SK-N-SH (cell line): ENCODE measurements at regions of chr16 and their contacts with region 1.

Region 1: DNA sequence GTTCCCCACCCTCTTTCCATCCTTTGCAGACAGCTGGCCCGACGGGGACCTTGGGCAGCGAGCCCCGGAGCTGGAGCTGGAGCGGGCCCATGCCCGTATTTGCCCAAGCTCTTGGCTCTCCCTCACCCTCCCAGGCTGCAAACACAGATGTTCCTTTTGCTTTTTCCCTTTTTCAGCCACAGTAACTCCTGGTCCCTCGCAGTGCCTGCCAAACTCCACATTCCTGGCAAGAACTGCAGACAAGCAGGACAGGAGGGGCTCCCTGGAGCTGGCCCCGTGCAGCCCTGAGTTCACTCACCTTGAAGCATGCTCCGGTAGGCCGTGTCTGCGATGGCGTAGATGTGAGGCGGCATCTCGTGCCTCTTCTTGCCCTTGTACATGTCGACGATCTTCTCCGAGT is 33.9 kb downstream of the MYH11 start:
- DNase-seq: no peak
- H3K4me3 ChIP-seq: no peak overlapping the region
- H3K27ac ChIP-seq: no peak overlapping the region
- H3K4me1 ChIP-seq: no peaks in the 10 kb centered on the region
- H3K27me3 ChIP-seq: no peaks in the 10 kb centered on the region; the same call in 1 of the 2 replicates
- CTCF ChIP-seq: no peak
- EP300 ChIP-seq: no peak
- RAD21 ChIP-seq: no peak

Region 2: GRCh38 chr16:15732416-15732815 is 90.5 kb before region 1 on chr16:
- CTCF ChIA-PET with region 1: no interaction called
- POLR2A ChIA-PET with region 1: no interaction called
- DNase-seq: no peak
- H3K4me3 ChIP-seq: no peak overlapping the region
- H3K27ac ChIP-seq: no peak overlapping the region
- H3K4me1 ChIP-seq: no peaks in the 10 kb centered on the region
- H3K27me3 ChIP-seq: no peaks in the 10 kb centered on the region
- CTCF ChIP-seq: no peak
- EP300 ChIP-seq: no peak
- RAD21 ChIP-seq: no peak

Region 3: DNA sequence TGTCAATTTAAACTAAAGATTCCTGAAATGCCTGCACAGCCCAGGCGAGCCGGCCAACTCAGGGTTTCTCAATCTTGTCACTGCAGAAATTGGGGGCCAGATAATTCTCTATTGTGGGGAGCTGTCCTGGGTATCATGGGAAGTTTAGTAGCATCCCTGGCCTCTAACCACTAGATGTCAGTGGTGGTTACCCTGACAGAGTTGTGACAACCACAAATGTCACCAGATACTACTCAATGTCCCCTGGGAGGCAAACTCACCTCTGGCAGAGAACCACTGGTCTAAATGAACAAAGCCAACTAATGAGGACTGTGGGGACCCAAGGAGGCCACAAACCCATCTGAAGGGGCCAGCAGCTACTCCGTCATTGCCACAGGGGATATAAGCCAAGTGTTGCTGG is 57.1 kb before region 1 on chr16:
- CTCF ChIA-PET with region 1: interaction called, 33 read pairs
- POLR2A ChIA-PET with region 1: no interaction called
- DNase-seq: peak; percentile 64
- H3K4me3 ChIP-seq: no peak overlapping the region; a peak in 1 of 4 replicates
- H3K27ac ChIP-seq: no peak overlapping the region
- H3K4me1 ChIP-seq: no peaks in the 10 kb centered on the region
- H3K27me3 ChIP-seq: peaks cover 4% of the 10 kb centered on the region; the same call in 1 of the 2 replicates
- CTCF ChIP-seq: peak; percentile 67
- EP300 ChIP-seq: no peak
- RAD21 ChIP-seq: peak; percentile 81

Region 4: DNA sequence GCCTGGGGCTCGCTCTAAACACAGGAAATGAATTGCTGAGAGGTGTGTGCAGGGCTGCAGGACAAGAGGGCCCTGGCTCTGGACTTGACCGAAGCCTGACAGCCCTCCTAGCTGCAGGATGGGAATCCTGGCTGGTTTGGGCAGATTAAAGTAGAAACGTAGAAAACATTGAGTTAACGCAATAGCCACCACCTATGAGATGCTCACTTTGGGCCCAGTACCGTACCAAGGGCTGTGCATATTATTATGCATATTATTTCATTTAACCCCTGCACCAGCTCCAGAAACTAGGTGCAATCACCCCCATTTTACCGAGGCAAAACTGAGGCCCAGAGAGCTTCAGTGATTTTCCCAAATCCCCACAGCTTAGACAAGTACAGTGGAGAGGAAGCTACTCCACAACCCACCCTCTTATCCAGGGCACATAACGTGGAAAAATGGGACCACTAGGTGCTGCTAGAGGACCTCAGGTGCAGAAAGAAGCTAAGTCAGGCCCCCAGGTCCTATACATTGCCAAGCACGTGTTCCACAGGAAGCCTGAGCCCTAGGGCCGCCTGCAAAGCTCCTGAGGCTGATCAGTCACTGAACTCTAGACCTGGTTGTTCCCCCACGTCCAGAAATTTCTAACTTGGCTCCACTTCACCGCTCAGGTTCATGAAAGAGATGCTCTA is 45.3 kb before region 1 on chr16:
- CTCF ChIA-PET with region 1: interaction called, 27 read pairs
- POLR2A ChIA-PET with region 1: no interaction called
- DNase-seq: peak; percentile 32
- H3K4me3 ChIP-seq: no peak overlapping the region
- H3K27ac ChIP-seq: no peak overlapping the region
- H3K4me1 ChIP-seq: no peaks in the 10 kb centered on the region
- H3K27me3 ChIP-seq: peaks cover 7% of the 10 kb centered on the region; the same call in 1 of the 2 replicates
- CTCF ChIP-seq: peak; percentile 40
- EP300 ChIP-seq: no peak
- RAD21 ChIP-seq: peak; percentile 62

Region 5: DNA sequence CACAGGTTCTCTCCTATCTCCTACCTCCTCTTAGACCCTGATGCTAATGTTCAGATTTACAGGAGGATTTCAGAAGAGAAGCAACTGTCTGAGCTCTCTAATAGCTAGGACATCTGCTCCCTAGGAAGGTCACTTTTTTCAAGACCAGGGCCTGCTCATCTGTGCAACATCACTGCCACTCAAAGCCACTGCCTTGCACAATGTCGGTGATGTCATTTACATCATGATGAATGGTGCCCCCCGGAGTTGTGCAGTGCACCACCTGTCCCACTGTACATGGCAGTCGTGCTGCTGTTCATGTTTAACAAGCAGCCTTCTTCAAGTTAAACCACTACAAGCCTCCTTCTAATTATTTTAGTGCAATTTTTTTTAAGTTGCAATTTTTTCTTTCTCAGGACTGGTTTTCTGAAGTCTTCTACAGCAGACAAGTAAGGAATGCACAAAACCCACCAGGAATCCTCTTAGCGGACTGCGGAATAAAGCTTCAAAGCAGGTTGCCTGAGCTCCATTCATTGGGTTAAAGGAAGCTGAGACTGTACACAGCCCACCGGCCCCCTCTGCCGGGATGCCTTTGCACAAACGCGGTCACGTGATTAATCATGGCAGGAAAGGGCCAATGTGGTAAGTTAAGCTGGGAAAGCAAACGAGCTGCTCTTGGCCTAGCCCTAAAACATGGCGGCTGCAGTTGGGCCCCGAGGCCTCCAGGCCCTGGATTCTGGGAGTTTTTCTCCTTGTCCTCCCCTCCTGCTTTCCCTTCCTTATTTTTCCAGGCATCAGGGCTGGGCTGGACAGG is 40.2 kb before region 1 on chr16:
- CTCF ChIA-PET with region 1: interaction called, 27 read pairs
- POLR2A ChIA-PET with region 1: no interaction called
- DNase-seq: peak; percentile 22
- H3K4me3 ChIP-seq: no peak overlapping the region
- H3K27ac ChIP-seq: no peak overlapping the region
- H3K4me1 ChIP-seq: no peaks in the 10 kb centered on the region
- H3K27me3 ChIP-seq: peaks cover 7% of the 10 kb centered on the region; the same call in 1 of the 2 replicates
- CTCF ChIP-seq: no peak
- EP300 ChIP-seq: no peak
- RAD21 ChIP-seq: no peak

Region 6: DNA sequence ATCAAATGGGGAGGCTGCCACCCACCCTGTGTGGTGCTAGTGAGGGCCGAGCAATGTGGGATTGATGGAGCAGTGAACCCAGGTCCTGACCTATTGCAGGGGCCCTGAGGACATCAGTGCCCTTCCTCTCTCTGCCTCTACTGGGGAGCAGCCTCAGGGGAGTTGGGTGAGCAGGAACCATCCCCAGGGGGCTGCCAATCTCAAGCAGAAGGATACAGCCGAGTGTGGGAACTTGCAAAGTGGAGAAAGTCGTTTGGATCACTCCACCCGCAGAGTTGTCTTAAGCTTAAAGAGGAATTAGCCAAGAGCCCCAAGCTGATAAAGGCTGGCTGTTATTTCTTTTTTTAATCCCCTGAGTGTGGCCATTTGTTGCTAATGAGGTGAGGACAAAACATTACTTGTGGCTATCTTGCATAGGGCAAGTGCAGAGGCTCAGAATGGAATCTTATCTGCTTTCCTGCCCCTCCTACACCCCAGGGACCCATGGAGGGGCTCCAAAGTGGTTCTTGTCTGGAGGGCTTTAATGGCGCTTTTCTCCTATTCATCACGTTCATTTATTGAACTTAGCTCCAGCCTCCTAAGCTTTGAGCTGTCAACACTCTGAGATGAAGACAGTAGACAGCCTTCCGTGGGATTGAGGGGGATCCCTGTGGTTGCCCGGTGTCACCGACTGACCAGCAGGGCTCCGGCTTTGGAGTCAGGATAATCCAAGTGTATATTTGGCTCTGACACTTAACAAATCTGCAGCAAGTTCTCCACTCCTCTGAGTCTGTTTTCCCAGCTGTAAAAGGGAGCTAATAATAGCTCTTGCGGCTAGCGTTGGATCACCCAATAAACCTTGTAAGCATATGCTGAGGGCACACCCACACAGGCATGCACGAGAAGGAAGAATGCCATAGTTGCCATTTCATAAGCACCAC is 11.2 kb before region 1 on chr16:
- CTCF ChIA-PET with region 1: interaction called, 83 read pairs
- POLR2A ChIA-PET with region 1: interaction called, 5 read pairs
- DNase-seq: no peak
- H3K4me3 ChIP-seq: no peak overlapping the region
- H3K27ac ChIP-seq: no peak overlapping the region
- H3K4me1 ChIP-seq: no peaks in the 10 kb centered on the region
- H3K27me3 ChIP-seq: no peaks in the 10 kb centered on the region; the same call in 1 of the 2 replicates
- CTCF ChIP-seq: no peak
- EP300 ChIP-seq: no peak
- RAD21 ChIP-seq: no peak

Region 7: GRCh38 chr16:15835136-15835878 is 12.3 kb after region 1 on chr16:
- CTCF ChIA-PET with region 1: interaction called, 19 read pairs
- POLR2A ChIA-PET with region 1: no interaction called
- DNase-seq: no peak
- H3K4me3 ChIP-seq: no peak overlapping the region
- H3K27ac ChIP-seq: no peak overlapping the region
- H3K4me1 ChIP-seq: no peaks in the 10 kb centered on the region
- H3K27me3 ChIP-seq: peaks cover 5% of the 10 kb centered on the region; the same call in 1 of the 2 replicates
- CTCF ChIP-seq: no peak
- EP300 ChIP-seq: no peak
- RAD21 ChIP-seq: no peak